ENCODE measurements at regions of chr22 and their contacts with region 1.

Region 1: GRCh38 chr22:26364066-26365015 is 64.7 kb upstream of the ASPHD2 start:
- DNase-seq: no peak
- ATAC-seq: peak; percentile 81
- H3K4me3 Mint-ChIP-seq: no peak overlapping the region
- H3K27ac Mint-ChIP-seq: no peak overlapping the region
- H3K4me1 Mint-ChIP-seq: peaks cover 7% of the 10 kb centered on the region
- H3K27me3 Mint-ChIP-seq: peaks cover 17% of the 10 kb centered on the region
- CTCF ChIP-seq: no peak

Region 2: GRCh38 chr22:25777870-25778269 is 586.5 kb before region 1 on chr22:
- CTCF ChIA-PET with region 1: no interaction called
- POLR2A ChIA-PET with region 1: no interaction called
- intact Hi-C with region 1: loop called (anchors 1 kb)
- DNase-seq: no peak
- ATAC-seq: no peak
- H3K4me3 Mint-ChIP-seq: no peak overlapping the region
- H3K27ac Mint-ChIP-seq: no peak overlapping the region
- H3K4me1 Mint-ChIP-seq: peaks cover 3% of the 10 kb centered on the region
- H3K27me3 Mint-ChIP-seq: peaks cover 6% of the 10 kb centered on the region
- CTCF ChIP-seq: no peak

Region 3: GRCh38 chr22:26461188-26461810 is 97.0 kb after region 1 on chr22:
- CTCF ChIA-PET with region 1: interaction called, 75 read pairs
- POLR2A ChIA-PET with region 1: no interaction called
- intact Hi-C with region 1: loop called (anchors 1 kb)
- DNase-seq: peak; percentile 47
- ATAC-seq: peak; percentile 57
- H3K4me3 Mint-ChIP-seq: no peak overlapping the region
- H3K27ac Mint-ChIP-seq: no peak overlapping the region
- H3K4me1 Mint-ChIP-seq: peaks cover 2% of the 10 kb centered on the region
- H3K27me3 Mint-ChIP-seq: no peaks in the 10 kb centered on the region
- CTCF ChIP-seq: peak; percentile 66

Region 4: DNA sequence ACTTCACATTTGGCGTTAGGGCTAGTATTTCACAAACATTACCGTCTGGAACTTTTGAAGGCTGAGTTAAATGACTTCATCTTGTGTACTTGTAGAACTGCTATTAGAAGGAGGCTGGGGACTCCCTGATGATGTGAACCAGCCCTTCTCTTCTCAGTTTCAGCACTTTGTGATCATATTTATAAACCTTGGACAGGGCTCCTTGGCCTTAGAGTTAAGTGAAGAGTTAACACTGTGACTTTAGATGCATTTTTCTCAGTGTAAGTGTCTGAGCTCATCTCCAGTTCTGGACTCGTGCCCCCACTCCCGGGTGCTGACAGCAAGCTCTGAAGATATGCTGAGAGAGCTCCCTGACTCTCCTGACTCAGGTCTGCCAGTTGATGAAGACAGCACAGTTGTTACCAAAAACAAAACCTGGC is 301.5 kb after region 1 on chr22:
- CTCF ChIA-PET with region 1: interaction called, 8 read pairs
- POLR2A ChIA-PET with region 1: no interaction called
- intact Hi-C with region 1: loop called (anchors 1 kb)
- DNase-seq: no peak
- ATAC-seq: no peak
- H3K4me3 Mint-ChIP-seq: peak overlapping the region; percentile 55
- H3K27ac Mint-ChIP-seq: peak overlapping the region; percentile 46
- H3K4me1 Mint-ChIP-seq: peaks cover 71% of the 10 kb centered on the region
- H3K27me3 Mint-ChIP-seq: no peaks in the 10 kb centered on the region
- CTCF ChIP-seq: no peak